ENCODE measurements at regions of chr10 and their contacts with region 1.

Region 1: DNA sequence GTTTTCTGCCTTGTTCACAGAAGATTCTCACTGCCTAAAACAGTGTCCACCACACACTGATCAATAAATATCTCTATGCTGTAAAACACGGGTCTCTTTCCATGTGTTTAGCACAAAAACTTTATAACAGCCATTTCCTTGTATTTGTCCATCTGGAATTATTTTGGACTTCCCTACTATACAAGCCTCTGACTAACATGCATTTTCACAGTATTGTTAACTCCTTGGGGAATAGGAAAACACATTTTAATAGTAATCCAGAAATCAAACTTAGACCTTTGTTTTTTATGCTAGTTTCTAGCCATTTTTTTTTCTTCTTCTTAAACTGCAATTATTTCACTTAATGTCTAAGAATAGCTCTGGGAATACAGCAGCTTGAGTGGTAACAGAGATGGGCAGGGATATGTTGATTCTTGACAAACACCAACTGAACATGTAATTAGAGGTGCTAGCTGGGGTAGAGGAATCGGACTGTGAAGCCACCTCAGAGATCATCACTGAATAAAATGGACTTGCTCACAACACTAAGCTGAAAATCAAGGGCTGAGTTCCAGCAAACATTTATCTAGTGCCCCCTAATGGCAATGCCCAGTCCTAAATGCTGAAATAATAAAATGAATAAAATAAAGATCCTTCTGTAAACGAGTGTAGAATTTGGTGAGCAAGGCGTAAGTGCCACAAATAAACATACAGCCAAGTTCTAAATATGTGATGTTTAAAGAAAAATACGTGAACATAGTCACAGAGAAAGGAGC is 593.1 kb downstream of the SORCS1 start:
- DNase-seq: peak; percentile 61
- ATAC-seq: peak; percentile 48; the same call in 1 of the 2 replicates
- H3K4me3 ChIP-seq: no peak overlapping the region
- H3K27ac ChIP-seq: no peak overlapping the region
- H3K4me1 ChIP-seq: no peaks in the 10 kb centered on the region
- H3K27me3 ChIP-seq: no peaks in the 10 kb centered on the region
- CTCF ChIP-seq: peak; percentile 50
- POLR2A ChIP-seq: no peak
- RAD21 ChIP-seq: peak; percentile 53

Region 2: GRCh38 chr10:105950410-105950809 is 621.0 kb before region 1 on chr10:
- CTCF ChIA-PET with region 1: no interaction called
- POLR2A ChIA-PET with region 1: no interaction called
- dilution Hi-C with region 1: no loop called
- in situ Hi-C with region 1: no loop called
- intact Hi-C with region 1: loop called (anchors 2 kb)
- DNase-seq: peak; percentile 34
- ATAC-seq: peak; percentile 53
- H3K4me3 ChIP-seq: no peak overlapping the region
- H3K27ac ChIP-seq: no peak overlapping the region
- H3K4me1 ChIP-seq: no peaks in the 10 kb centered on the region
- H3K27me3 ChIP-seq: no peaks in the 10 kb centered on the region
- CTCF ChIP-seq: peak; percentile 48
- POLR2A ChIP-seq: no peak
- RAD21 ChIP-seq: peak; percentile 32

Region 3: DNA sequence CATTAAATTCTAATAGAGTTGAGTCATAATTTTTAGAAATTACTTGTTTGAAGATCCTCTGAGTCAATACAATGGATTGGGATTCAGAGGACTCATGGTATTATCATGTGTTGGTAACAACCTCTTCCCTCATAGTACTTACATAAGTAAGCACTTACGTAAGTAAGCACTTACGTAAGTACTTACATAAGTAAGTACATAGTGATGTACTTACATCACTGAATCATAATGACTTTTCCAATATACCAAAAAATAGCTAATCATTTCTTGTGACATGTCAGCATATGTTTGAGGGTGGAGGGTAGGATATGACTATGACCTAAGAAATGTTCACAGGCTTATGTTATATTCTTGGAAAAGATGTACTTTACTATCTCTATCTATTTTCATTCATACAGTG is 147.3 kb before region 1 on chr10:
- CTCF ChIA-PET with region 1: no interaction called
- POLR2A ChIA-PET with region 1: no interaction called
- dilution Hi-C with region 1: no loop called
- in situ Hi-C with region 1: loop called (anchors 10 kb)
- intact Hi-C with region 1: no loop called
- DNase-seq: peak; percentile 96
- ATAC-seq: no peak; the same call in 1 of the 2 replicates
- H3K4me3 ChIP-seq: no peak overlapping the region
- H3K27ac ChIP-seq: no peak overlapping the region
- H3K4me1 ChIP-seq: no peaks in the 10 kb centered on the region
- H3K27me3 ChIP-seq: no peaks in the 10 kb centered on the region
- CTCF ChIP-seq: no peak
- POLR2A ChIP-seq: no peak
- RAD21 ChIP-seq: peak; percentile 14; the same call in 1 of the 2 replicates

Region 4: GRCh38 chr10:106557951-106558733 is 13.2 kb before region 1 on chr10:
- CTCF ChIA-PET with region 1: no interaction called
- POLR2A ChIA-PET with region 1: no interaction called
- dilution Hi-C with region 1: no loop called
- in situ Hi-C with region 1: no loop called
- intact Hi-C with region 1: no loop called
- DNase-seq: peak; percentile 71
- ATAC-seq: peak; percentile 53
- H3K4me3 ChIP-seq: no peak overlapping the region
- H3K27ac ChIP-seq: peak overlapping the region; percentile 94
- H3K4me1 ChIP-seq: peaks cover 4% of the 10 kb centered on the region
- H3K27me3 ChIP-seq: no peaks in the 10 kb centered on the region
- CTCF ChIP-seq: no peak
- POLR2A ChIP-seq: no peak
- RAD21 ChIP-seq: no peak